HEK293T (cell line): ENCODE measurements at regions of chr1 and their contacts with region 1.

Region 1: GRCh38 chr1:206583707-206584648 is 28.3 kb downstream of the EIF2D start:
- DNase-seq: peak; percentile 79

Region 2: GRCh38 chr1:206479183-206480125 is 104.5 kb before region 1 on chr1:
- CTCF ChIA-PET with region 1: interaction called, 16 read pairs
- POLR2A ChIA-PET with region 1: no interaction called
- DNase-seq: peak; percentile 89

Region 3: DNA sequence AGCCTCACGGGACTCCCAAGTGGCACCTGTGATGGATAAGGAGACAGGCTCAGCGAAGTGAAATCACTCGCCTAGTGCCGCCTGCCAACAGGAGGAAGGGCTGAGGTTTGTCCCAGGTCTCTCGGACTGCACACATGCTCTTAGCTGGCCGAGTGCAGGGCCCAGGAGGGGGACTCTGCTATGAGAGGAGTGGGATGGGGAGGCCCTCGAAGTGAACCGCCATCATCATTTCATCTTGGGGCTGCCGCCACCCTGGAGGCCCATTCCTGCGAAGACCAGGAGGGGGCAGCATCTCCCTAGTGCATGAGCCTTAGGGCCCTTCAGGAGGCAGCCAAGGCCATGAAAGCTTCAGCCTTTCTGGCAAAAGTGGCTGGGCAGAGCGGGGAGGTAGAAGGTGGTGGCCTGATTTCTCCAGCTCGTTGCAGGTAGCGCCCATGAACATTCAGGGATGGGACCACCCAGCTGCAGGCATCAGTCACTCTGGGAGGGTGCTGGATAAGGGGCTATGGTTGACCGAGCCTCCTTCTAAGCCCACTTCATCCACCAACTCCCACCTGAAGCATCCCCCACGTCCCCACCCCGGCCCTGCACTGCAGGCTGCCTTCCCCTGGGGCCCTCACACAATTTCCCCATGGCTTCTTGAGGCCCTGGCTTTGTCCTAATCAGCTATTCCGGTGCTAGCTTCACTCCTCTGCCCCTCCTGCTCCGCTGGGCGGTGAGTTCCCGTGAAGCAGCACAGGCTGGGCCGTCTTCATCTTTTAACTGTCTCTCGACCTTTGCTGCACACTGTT is 93.8 kb before region 1 on chr1:
- CTCF ChIA-PET with region 1: interaction called, 38 read pairs
- POLR2A ChIA-PET with region 1: interaction called, 5 read pairs
- DNase-seq: peak; percentile 93

Region 4: GRCh38 chr1:206502413-206503211 is 81.4 kb before region 1 on chr1:
- CTCF ChIA-PET with region 1: no interaction called
- POLR2A ChIA-PET with region 1: no interaction called
- DNase-seq: no peak

Region 5: DNA sequence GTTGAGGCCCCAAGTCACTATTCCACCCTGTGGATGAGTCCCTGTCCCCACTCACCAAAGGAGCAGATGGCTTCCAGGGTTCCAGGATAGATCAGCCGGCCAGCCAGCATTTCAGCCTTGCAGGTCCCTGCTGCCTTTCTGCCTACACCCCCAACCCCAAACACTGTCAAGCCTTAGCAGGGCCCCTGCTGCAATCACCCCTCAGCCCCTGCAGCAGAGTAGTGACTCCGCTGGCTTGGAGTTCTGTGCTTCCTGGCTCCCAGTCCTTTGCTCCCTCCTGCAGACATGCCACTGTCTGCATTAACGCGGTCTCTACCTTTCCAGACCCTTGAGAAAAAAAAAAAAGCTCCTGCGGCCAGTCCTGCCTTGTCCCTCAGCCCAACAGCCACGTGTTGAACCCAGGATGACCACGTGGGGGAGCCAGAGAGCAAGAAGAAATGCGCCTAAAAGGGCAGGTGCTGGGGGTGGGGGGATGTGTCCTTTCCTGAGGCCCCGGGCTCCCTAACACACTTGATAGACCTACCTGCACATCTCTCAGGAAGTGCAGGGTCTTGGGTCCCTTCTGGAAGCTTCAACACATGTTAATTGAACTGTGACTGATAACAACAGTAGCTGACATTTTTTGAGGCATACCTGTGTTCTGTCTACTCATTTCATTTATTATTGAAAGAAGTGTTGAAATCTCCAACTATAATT is 39.3 kb before region 1 on chr1:
- CTCF ChIA-PET with region 1: interaction called, 17 read pairs
- POLR2A ChIA-PET with region 1: no interaction called
- DNase-seq: peak; percentile 92